Activated CD8-positive, alpha-beta memory T cell treated with anti-CD3 and anti-CD28 coated beads, Interleukin-2, amount 10 ng/mL, durations not matched to agents 7 days and 5 days (primary cell): ENCODE measurements at regions of chr3 and their contacts with region 1.

Region 1: GRCh38 chr3:46378426-46378942 is 7.7 kb downstream of the CCR5 start:
- DNase-seq: peak; percentile 81
- ATAC-seq: peak; percentile 34
- H3K4me3 Mint-ChIP-seq: no peak overlapping the region
- H3K27ac Mint-ChIP-seq: peak overlapping the region; percentile 53
- H3K4me1 Mint-ChIP-seq: peaks cover 72% of the 10 kb centered on the region
- H3K27me3 Mint-ChIP-seq: peaks cover 6% of the 10 kb centered on the region

Region 2: DNA sequence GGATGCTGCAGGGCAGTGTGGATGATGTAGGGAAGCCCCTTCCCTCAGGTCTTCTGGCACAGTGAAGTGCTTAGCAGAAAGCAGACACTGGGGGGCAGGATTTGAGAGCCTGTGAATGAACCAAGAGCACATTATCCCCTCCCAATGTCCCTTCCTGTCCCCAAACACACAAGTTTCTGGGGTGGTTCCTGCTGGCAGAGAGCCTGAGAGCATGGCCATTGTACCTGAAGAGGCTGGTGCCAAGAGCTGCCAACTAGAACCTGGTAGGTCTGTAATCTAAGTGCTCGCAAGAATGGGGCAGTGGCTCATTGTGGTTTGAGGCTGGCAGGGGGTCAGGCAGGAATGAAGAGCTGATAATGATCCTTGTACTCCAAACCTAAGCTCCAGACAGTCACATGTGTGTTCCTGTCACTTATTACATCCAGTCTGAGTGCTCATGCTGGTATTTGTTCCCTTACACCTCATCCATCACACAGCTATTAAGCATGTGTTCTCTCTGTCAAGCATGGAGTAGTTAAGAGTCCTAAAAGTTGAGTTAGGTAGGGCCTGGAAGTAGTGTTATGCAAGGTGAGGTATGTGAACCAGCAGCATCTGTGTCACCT is 163.6 kb before region 1 on chr3:
- CTCF ChIA-PET with region 1: interaction called, 248 read pairs
- DNase-seq: peak; percentile 72
- ATAC-seq: peak; percentile 60
- H3K4me3 Mint-ChIP-seq: no peak overlapping the region
- H3K27ac Mint-ChIP-seq: no peak overlapping the region
- H3K4me1 Mint-ChIP-seq: peaks cover 32% of the 10 kb centered on the region
- H3K27me3 Mint-ChIP-seq: peaks cover 3% of the 10 kb centered on the region

Region 3: GRCh38 chr3:46266598-46266997 is 111.9 kb before region 1 on chr3:
- CTCF ChIA-PET with region 1: interaction called, 186 read pairs
- DNase-seq: no peak
- ATAC-seq: no peak
- H3K4me3 Mint-ChIP-seq: no peak overlapping the region
- H3K27ac Mint-ChIP-seq: no peak overlapping the region
- H3K4me1 Mint-ChIP-seq: peaks cover 73% of the 10 kb centered on the region
- H3K27me3 Mint-ChIP-seq: peaks cover 4% of the 10 kb centered on the region

Region 4: GRCh38 chr3:46297658-46298463 is 80.6 kb before region 1 on chr3:
- CTCF ChIA-PET with region 1: interaction called, 231 read pairs
- DNase-seq: no peak
- ATAC-seq: no peak
- H3K4me3 Mint-ChIP-seq: no peak overlapping the region
- H3K27ac Mint-ChIP-seq: peak overlapping the region; percentile 96
- H3K4me1 Mint-ChIP-seq: peaks cover 92% of the 10 kb centered on the region
- H3K27me3 Mint-ChIP-seq: peaks cover 4% of the 10 kb centered on the region

Region 5: GRCh38 chr3:46406788-46407611 is 28.5 kb after region 1 on chr3 and contains the starts of genes CCR5AS and CCRL2:
- CTCF ChIA-PET with region 1: interaction called, 11 read pairs
- DNase-seq: peak; percentile 81
- ATAC-seq: peak; percentile 90
- H3K4me3 Mint-ChIP-seq: peak within 1 kb of the TSS; percentile 86
- H3K27ac Mint-ChIP-seq: peak within 1 kb of the TSS; percentile 96
- H3K4me1 Mint-ChIP-seq: peaks cover 39% of the 10 kb centered on the region
- H3K27me3 Mint-ChIP-seq: peaks cover 6% of the 10 kb centered on the region
- total RNA-seq, gene CCRL2: 10.0 to 11.9 TPM

Region 6: GRCh38 chr3:46578973-46579755 is 200.7 kb after region 1 on chr3:
- CTCF ChIA-PET with region 1: no interaction called
- DNase-seq: no peak
- ATAC-seq: no peak
- H3K4me3 Mint-ChIP-seq: no peak overlapping the region
- H3K27ac Mint-ChIP-seq: no peak overlapping the region
- H3K4me1 Mint-ChIP-seq: no peaks in the 10 kb centered on the region
- H3K27me3 Mint-ChIP-seq: peaks cover 42% of the 10 kb centered on the region